GM10248 (cell line): ENCODE measurements at regions of chr7 and their contacts with region 1.

Region 1: GRCh38 chr7:87910138-87910537 is 23.9 kb upstream of the ADAM22 start:
- DNase-seq: no peak
- CTCF ChIP-seq: no peak

Region 2: GRCh38 chr7:87853237-87853864 is 56.8 kb before region 1 on chr7:
- CTCF ChIA-PET with region 1: no interaction called
- POLR2A ChIA-PET with region 1: no interaction called
- DNase-seq: no peak
- CTCF ChIP-seq: no peak

Region 3: GRCh38 chr7:87920578-87920977 is 10.4 kb after region 1 on chr7:
- CTCF ChIA-PET with region 1: interaction called, 11 read pairs
- POLR2A ChIA-PET with region 1: no interaction called
- DNase-seq: no peak
- CTCF ChIP-seq: no peak